ENCODE measurements at regions of chr3 and their contacts with region 1.

Region 1: GRCh38 chr3:48088749-48089466 is 72.7 kb upstream of the MAP4 start:
- DNase-seq: peak; percentile 99
- ATAC-seq: peak; percentile 95

Region 2: GRCh38 chr3:47989981-47990440 is 98.9 kb before region 1 on chr3:
- intact Hi-C with region 1: loop called (anchors 5 kb)
- DNase-seq: peak; percentile 78
- ATAC-seq: peak; percentile 94

Region 3: DNA sequence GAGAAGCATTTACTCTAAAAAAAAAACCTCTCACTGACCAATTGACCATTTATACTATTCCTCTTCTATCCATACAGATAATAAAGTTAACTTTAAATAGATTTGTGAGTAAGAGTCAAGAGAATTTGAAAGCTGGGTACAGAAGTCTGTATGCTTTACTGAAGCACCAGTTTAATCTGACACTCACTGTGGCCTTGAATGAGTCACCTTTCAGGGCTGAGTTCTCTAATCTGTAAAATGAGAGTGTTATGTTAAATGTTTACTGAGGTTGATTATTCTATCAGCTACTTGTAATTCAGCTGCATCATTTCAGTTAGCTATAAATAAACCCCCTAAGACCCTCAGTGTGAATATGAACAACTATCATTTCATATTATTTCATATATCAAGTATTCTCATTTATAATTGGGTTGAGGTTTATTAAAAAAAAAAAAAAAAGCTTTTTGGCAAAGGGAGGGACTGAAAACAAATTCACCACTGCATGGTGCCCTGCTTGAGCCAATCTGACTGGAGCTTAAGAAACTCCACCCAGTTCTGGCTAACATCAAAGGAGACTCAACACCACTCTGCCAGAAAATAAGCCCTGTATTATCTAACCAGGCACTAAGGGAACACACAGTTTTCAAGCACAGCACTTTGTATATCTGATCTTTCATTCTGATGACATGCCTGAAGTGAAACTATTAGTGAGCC is 75.5 kb before region 1 on chr3:
- intact Hi-C with region 1: loop called (anchors 1 kb)
- DNase-seq: no peak
- ATAC-seq: peak; percentile 90

Region 4: DNA sequence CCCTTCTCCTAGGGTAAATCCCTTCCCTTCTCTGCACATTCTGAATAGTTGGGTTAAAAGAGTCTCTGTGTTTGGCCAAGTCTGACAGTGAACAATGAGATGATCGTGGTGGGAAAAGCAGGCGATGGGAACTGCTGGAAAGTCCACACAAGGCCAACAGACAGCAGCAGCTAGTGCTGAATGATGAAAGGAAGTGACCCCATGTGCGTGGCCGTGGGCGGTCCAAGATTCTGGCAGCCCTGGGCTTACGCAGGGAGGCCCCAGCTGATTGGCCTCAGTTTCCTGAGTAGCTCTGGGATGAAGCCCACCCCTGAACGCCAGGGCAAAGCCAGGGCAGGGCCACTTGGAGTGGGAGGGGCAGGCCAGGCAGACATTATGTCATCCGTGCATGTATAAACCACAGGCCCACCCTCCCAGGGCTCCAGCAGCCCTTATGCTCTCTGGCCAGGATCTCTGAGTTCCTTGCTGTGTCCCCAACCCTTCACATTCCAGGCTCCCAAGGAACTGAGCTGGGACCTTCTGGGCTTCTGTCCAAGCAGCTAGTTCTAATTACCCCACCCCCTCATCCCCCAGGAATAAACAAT is 41.5 kb after region 1 on chr3:
- intact Hi-C with region 1: loop called (anchors 2 kb)
- DNase-seq: peak; percentile 90
- ATAC-seq: peak; percentile 94

Region 5: DNA sequence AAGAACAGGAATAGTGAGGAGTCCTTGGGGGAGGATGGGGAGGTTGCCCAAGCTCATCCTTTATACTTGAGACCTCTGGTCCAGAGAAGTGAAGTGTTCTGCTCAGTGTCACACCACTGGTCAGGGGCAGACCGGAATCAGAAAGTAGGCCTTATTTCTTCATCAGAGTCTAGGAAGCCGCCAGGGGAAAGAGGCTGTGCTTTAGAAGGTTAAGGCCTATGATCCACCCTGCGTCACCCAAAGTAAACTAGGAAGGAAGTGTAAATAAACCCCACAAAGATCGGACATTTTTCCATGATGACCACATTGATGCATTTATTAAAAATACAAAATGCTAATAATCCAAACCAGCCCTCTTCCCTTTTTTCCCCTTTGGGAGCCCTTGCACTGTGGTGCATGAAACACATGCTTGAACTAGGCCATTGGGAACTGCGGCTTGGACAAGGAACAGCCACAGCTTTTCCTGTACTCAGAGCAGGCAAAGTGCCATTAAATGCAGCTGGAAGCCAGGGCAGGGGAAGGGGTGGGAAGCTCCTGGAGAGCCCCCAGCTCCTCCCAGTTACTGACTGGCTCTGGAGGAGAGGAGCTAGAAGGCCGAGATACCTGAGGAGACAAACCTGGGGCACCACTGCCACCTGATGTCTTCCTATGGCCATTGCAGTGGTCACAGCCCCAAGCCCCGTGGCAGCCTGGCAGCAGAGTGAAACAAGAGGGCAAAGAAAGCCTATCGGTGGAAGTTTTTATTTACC is 62.3 kb after region 1 on chr3:
- intact Hi-C with region 1: loop called (anchors 2 kb)
- DNase-seq: peak; percentile 79
- ATAC-seq: peak; percentile 97

Region 6: DNA sequence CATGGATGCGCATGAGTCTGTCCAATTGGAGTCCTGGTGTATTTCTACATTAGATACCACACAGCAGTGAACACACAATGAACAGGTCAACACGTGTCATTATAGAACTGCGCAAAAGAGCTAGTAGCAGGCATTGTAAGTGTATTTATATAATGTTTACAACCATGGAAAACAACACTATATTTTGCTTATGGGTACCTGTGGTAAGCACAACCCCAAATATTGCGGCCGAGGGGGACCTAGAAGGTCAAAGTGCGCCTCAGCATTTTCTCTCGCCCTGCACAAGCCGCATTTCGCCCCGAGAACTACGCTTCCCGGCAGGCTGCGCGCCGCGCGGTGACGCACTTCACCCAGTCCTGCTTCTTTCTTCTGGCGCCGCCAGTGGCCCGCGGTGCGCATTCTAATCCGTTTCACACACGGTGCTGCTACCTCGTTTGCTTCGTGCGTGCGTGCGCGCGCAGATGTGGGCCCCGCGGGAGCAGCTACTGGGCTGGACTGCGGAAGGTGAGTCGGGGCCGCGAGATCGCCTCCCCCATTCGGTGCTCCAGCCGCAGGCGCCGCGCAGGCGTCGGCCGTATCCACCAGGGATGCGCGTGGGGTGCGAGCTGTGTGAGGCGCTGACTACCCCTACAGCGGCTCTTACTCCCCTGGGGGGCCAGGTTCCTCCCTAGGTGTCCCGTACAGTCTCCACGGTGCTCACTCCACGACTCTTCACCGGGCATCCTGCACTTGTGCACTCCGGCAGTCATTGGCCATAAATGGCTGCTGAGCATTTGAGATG is 152.0 kb after region 1 on chr3 and contains the start of gene ZNF589:
- intact Hi-C with region 1: no loop called
- DNase-seq: peak; percentile 98
- ATAC-seq: peak; percentile 95
- total RNA-seq, gene ZNF589: 6.2 TPM